Activated CD8-positive, alpha-beta T cell treated with anti-CD3 and anti-CD28 coated beads, Interleukin-2, amount 10 ng/mL, durations not matched to agents 7 days and 5 days (primary cell): ENCODE measurements at regions of chr1 and their contacts with region 1.

Region 1: GRCh38 chr1:168190284-168190870 is 11.6 kb downstream of the TIPRL start:
- DNase-seq: no peak
- ATAC-seq: no peak
- H3K4me3 Mint-ChIP-seq: no peak overlapping the region
- H3K27ac Mint-ChIP-seq: no peak overlapping the region
- H3K4me1 Mint-ChIP-seq: no peaks in the 10 kb centered on the region
- H3K27me3 Mint-ChIP-seq: no peaks in the 10 kb centered on the region

Region 2: GRCh38 chr1:168178638-168179437 is 11.5 kb before region 1 on chr1 and contains the start of gene TIPRL:
- CTCF ChIA-PET with region 1: interaction called, 11 read pairs
- POLR2A ChIA-PET with region 1: interaction called, 3 read pairs
- DNase-seq: peak; percentile 96
- ATAC-seq: peak; percentile 94
- H3K4me3 Mint-ChIP-seq: no peak within 1 kb of the TSS
- H3K27ac Mint-ChIP-seq: no peak within 1 kb of the TSS
- H3K4me1 Mint-ChIP-seq: peaks cover 11% of the 10 kb centered on the region
- H3K27me3 Mint-ChIP-seq: no peaks in the 10 kb centered on the region
- total RNA-seq, gene TIPRL: 48.6 to 53.6 TPM